Activated CD4-positive, alpha-beta memory T cell treated with anti-CD3 and anti-CD28 coated beads, Interleukin-2, amount 10 ng/mL, durations not matched to agents 7 days and 5 days (primary cell): ENCODE measurements at regions of chr20 and their contacts with region 1.

Region 1: DNA sequence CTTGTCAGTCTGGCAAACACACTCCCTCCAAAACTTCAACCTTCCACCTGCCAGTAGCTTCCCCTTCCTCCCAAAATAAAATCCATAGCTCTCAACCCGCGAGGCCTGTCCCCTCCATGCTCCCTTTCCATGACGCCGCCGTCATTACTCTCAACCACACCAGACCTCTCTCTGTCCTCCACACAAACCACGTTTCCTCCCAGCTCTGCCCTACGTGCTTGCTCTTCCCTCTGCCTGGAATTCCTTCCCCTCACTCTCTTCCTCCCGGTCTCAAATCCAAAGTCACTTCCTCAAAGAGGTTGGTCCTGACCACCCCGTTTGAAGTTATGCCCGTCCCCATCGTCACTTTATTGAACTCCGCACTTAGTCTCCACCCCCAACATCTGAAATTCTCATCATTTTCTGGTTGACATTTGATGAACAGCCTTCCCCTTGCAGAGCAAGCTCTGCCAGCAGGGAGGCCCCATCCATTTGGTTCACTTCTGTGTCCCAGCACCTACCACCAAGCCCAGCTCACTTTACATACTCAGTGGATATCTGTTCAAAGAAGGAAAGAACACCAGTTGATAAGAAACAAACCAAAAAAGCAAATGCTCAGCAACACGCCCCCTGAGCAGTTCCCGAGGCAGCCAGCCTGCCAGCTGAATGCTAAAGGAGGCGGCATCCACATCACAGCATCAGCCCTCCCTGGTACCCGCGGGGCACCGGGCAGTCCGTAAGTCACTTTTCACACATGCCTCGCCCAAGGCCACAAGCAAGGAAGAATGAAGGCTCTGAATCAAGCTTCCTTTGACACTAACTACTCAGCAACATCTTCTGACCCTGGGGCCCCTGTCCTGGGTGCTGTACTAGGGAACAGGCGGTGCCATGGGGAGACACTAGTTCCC is 125.0 kb downstream of the NFATC2 start:
- DNase-seq: peak; percentile 55
- H3K4me3 Mint-ChIP-seq: peak overlapping the region; percentile 1
- H3K27ac Mint-ChIP-seq: peak overlapping the region; percentile 85
- H3K4me1 Mint-ChIP-seq: peaks cover 97% of the 10 kb centered on the region
- H3K27me3 Mint-ChIP-seq: no peaks in the 10 kb centered on the region

Region 2: DNA sequence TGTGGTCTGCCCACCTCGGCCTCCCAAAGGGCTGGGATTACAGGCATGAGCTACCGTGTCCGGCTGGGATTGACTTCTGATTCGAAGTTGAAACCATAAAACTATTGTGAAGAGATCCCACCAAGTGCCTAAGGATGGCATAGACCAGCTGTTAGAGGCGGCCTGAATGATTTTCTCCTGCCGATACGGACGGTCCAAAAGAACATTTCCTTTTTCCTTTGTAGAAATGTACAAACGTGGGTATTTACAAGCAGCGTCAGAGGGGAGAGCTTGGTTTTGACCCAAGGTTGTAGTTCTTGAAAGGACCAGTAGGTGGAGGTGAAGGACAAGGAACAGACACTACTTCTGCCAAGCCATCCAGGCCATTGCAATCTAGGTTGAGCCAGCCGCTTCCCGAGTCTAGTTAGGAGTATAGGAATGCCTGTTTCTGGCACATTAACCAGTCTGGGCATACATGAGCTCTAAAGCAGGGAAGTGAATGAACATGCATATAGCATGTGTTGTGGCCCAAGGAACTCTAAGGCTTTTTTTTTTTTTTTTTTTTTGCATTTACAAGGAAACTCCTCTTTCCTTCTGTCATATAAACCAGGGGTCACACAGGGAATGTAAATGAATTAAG is 429.8 kb before region 1 on chr20:
- CTCF ChIA-PET with region 1: no interaction called
- POLR2A ChIA-PET with region 1: no interaction called
- DNase-seq: peak; percentile 54
- H3K4me3 Mint-ChIP-seq: no peak overlapping the region
- H3K27ac Mint-ChIP-seq: no peak overlapping the region
- H3K4me1 Mint-ChIP-seq: peaks cover 2% of the 10 kb centered on the region
- H3K27me3 Mint-ChIP-seq: peaks cover 27% of the 10 kb centered on the region

Region 3: GRCh38 chr20:51372176-51372803 is 45.2 kb before region 1 on chr20:
- CTCF ChIA-PET with region 1: no interaction called
- POLR2A ChIA-PET with region 1: no interaction called
- DNase-seq: peak; percentile 66
- H3K4me3 Mint-ChIP-seq: no peak overlapping the region
- H3K27ac Mint-ChIP-seq: no peak overlapping the region
- H3K4me1 Mint-ChIP-seq: peaks cover 18% of the 10 kb centered on the region
- H3K27me3 Mint-ChIP-seq: no peaks in the 10 kb centered on the region

Region 4: GRCh38 chr20:51428401-51429143 is 11.1 kb after region 1 on chr20:
- CTCF ChIA-PET with region 1: interaction called, 3 read pairs
- POLR2A ChIA-PET with region 1: interaction called, 26 read pairs
- DNase-seq: no peak
- H3K4me3 Mint-ChIP-seq: no peak overlapping the region
- H3K27ac Mint-ChIP-seq: peak overlapping the region; percentile 63
- H3K4me1 Mint-ChIP-seq: peaks cover 89% of the 10 kb centered on the region
- H3K27me3 Mint-ChIP-seq: no peaks in the 10 kb centered on the region

Region 5: GRCh38 chr20:51460569-51461250 is 43.2 kb after region 1 on chr20:
- CTCF ChIA-PET with region 1: no interaction called
- POLR2A ChIA-PET with region 1: no interaction called
- DNase-seq: no peak
- H3K4me3 Mint-ChIP-seq: no peak overlapping the region
- H3K27ac Mint-ChIP-seq: no peak overlapping the region
- H3K4me1 Mint-ChIP-seq: peaks cover 41% of the 10 kb centered on the region
- H3K27me3 Mint-ChIP-seq: no peaks in the 10 kb centered on the region